Activated CD4-positive, alpha-beta memory T cell treated with anti-CD3 and anti-CD28 coated beads for 36 hours (primary cell): ENCODE measurements at regions of chr7 and their contacts with region 1.

Region 1: DNA sequence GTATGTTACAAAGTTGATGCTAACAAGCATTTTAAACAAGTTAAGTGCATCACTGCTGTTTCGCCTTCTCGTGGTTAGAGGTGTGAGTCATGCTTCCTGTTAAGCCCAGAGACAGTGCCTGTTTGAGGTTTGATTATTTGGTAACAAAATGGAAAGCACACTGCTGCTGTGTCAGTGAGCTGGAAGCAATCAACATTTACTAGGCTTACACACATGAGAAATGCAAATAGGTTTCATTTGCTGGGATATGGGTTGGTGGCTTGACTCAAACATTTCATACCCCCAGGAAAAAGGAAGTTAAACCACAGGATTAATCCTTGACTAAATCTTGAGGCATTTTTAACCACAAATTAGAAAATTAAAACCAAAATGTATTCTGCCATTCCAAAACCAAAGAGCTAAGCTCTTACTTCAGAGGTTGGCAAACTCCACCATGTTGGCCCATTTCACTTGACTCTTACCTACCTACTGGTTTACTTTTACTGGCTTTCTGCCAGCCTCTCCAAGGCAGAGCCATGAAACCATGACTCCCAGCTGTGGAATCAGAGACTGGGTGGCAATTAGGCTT is 139.2 kb downstream of the ETV1 start:
- DNase-seq: peak; percentile 63
- H3K4me3 Mint-ChIP-seq: no peak overlapping the region
- H3K27ac Mint-ChIP-seq: no peak overlapping the region
- H3K4me1 Mint-ChIP-seq: peaks cover 17% of the 10 kb centered on the region
- H3K27me3 Mint-ChIP-seq: no peaks in the 10 kb centered on the region

Region 2: GRCh38 chr7:13757841-13758240 is 92.4 kb before region 1 on chr7:
- CTCF ChIA-PET with region 1: no interaction called
- POLR2A ChIA-PET with region 1: no interaction called
- intact Hi-C with region 1: no loop called
- DNase-seq: no peak
- H3K4me3 Mint-ChIP-seq: no peak overlapping the region
- H3K27ac Mint-ChIP-seq: no peak overlapping the region
- H3K4me1 Mint-ChIP-seq: no peaks in the 10 kb centered on the region
- H3K27me3 Mint-ChIP-seq: no peaks in the 10 kb centered on the region

Region 3: DNA sequence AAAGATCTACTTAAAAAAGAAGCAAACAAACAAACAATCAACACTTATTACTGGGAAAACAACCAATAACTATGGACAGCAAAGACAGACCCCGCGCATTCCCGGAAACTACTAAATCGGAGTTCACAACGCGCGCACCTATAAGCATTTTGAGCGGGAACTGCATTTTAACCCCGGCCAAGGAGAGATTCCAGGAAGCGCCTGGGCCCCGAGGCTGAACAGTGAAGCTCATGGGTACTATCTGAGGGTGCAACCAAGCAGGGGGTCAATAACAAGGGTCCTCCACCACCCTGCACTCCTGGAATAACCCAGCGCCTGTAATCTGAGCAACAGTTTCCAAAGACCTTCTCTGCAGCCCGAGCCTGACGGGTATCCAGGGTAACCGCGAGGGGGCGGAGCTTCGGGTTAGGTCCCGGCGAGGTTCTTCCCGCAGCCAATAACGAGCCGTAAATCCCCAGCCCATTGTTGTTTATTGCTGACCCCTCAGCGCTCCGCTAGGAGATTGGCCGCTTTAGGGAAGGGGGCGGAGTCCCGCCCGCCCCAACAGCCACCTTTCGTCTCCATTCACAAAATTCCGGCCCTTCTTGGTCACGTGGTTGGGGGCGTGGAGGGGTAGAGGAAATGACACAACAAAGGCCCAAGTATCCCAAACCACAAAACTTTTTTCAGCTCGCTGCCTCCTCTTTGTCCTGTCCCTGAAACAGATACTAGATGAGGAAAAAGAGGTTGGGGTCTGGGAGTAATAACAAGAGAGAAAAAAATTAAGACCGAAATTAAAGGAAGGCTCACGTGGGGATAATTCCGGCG is 140.9 kb after region 1 on chr7:
- CTCF ChIA-PET with region 1: no interaction called
- POLR2A ChIA-PET with region 1: no interaction called
- intact Hi-C with region 1: loop called (anchors 2 kb)
- DNase-seq: peak; percentile 83
- H3K4me3 Mint-ChIP-seq: no peak overlapping the region
- H3K27ac Mint-ChIP-seq: no peak overlapping the region
- H3K4me1 Mint-ChIP-seq: no peaks in the 10 kb centered on the region
- H3K27me3 Mint-ChIP-seq: peaks cover 3% of the 10 kb centered on the region